Dorsolateral prefrontal cortex (tissue), 120 donors: ENCODE measurements at regions of chr1 and their contacts with region 1.

Region 1: GRCh38 chr1:201447911-201448871 is 20.8 kb downstream of the PHLDA3 start:
- DNase-seq: peak in 9 of 10 donors; percentile 80 to 93 (median 86)
- H3K4me3 ChIP-seq: peak overlapping the region in 18 of 59 donors; percentile 1 to 36 (median 9)
- H3K27ac ChIP-seq: peak overlapping the region in 58 of 59 donors; percentile 59 to 100 (median 95)
- H3K27me3 ChIP-seq: no peaks in the 10 kb centered on the region
- CTCF ChIP-seq: peak; percentile 65 to 96 (median 81)

Region 2: GRCh38 chr1:201463071-201463552 is 14.9 kb after region 1 on chr1:
- intact Hi-C with region 1: loop called (anchors 2 kb)
- DNase-seq: peak in 9 of 10 donors; percentile 47 to 82 (median 69)
- H3K4me3 ChIP-seq: no peak overlapping the region
- H3K27ac ChIP-seq: peak overlapping the region; percentile 30 to 99 (median 91)
- H3K27me3 ChIP-seq: no peaks in the 10 kb centered on the region
- CTCF ChIP-seq: peak in 55 of 56 donors; percentile 21 to 86 (median 65)

Region 3: GRCh38 chr1:201468844-201469511 is 20.8 kb after region 1 on chr1 and contains the start of gene PHLDA3:
- intact Hi-C with region 1: loop called in 1 of 2 experiments (anchors 1 kb)
- DNase-seq: peak; percentile 60 to 96 (median 93)
- H3K4me3 ChIP-seq: peak within 1 kb of the TSS; percentile 54 to 97 (median 86)
- H3K27ac ChIP-seq: peak within 1 kb of the TSS; percentile 27 to 99 (median 96)
- H3K27me3 ChIP-seq: no peaks in the 10 kb centered on the region
- CTCF ChIP-seq: peak in 22 of 56 donors; percentile 8 to 43 (median 19)
- total RNA-seq, gene PHLDA3: 34.3 to 144 (median 58.1) TPM

Region 4: DNA sequence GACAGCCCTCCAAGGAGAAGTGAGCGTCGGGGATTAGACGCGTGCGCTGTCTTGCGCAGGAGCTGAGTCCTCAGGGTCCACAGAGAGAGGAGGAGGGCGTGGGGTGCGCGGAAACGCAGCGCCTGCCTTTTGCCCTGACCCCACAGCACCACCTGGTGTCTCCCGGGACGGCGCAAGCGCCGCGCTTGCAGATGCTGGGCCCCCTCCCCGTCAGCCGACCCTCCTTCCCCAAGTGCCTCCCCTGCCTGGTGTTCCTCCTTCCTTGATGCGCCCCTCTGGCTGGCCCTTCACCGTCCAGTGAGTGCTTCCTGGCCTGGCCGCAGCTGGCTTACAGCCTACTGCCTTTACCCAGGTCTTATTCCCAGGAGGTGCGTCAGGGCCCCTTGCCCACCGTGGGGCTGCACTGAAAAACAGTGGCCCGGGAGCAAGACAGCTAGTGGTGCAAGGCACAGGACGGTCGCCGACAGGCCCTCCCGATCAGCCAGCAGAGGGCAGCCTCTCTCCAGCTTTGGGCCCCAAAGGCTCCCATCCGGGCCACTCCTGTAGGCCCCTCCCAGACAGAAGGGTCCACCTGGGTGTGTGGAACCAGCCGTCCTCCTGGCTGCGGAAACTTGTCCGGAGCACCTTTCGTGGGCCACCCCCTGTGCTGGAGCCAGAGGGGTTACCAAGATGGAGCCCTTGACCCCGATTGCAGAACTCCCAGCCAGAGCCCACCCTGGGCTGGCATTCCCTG is 33.7 kb after region 1 on chr1:
- intact Hi-C with region 1: loop called (anchors 1 to 5 kb)
- DNase-seq: peak; percentile 45 to 93 (median 86)
- H3K4me3 ChIP-seq: peak overlapping the region in 49 of 59 donors; percentile 1 to 61 (median 41)
- H3K27ac ChIP-seq: peak overlapping the region; percentile 27 to 100 (median 89)
- H3K27me3 ChIP-seq: peaks cover 0 to 9% (median 0%) of the 10 kb centered on the region in 45 donors
- CTCF ChIP-seq: peak; percentile 59 to 99 (median 95)

Region 5: DNA sequence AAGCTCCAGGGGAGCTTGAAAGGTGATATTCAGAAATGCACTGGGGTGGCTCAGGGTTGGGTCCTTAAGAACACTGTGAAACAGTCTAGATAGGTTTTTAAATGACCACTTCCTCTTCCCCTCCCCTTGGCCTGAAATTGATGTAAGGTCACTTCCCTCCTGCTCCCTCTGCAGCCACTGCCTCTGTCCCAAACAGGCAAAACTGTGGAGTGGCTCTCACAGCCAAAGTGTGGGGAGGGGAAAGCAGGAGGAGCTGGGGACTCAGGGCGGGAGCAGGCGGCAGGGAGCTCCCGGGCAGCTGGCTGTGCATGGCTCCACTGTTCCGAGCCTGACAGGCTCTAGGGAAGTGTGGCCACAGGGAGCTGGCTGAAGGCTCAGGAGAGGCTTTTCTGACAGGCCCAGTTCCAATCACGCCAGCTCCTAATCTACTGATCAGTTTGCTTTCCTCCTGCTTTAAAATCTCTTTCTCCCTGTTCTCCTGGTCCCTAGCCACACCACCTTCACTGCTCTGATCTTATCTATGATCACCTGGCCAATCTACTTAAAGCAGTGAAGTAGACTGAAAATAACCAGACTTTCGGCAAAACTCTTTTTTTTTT is 63.8 kb after region 1 on chr1:
- intact Hi-C with region 1: loop called (anchors 2 to 5 kb)
- DNase-seq: peak in 9 of 10 donors; percentile 48 to 82 (median 72)
- H3K4me3 ChIP-seq: peak overlapping the region in 21 of 59 donors; percentile 1 to 35 (median 14)
- H3K27ac ChIP-seq: peak overlapping the region in 58 of 59 donors; percentile 52 to 100 (median 88)
- H3K27me3 ChIP-seq: no peaks in the 10 kb centered on the region
- CTCF ChIP-seq: peak in 16 of 56 donors; percentile 7 to 33 (median 20)

Region 6: GRCh38 chr1:201807958-201808632 is 359.9 kb after region 1 on chr1:
- intact Hi-C with region 1: no loop called
- DNase-seq: no peak
- H3K4me3 ChIP-seq: no peak overlapping the region
- H3K27ac ChIP-seq: peak overlapping the region in 24 of 59 donors; percentile 1 to 59 (median 38)
- H3K27me3 ChIP-seq: no peaks in the 10 kb centered on the region
- CTCF ChIP-seq: no peak